ENCODE measurements at regions of chr2 and their contacts with region 1.

Region 1: GRCh38 chr2:36322108-36322507 is 33.5 kb upstream of the CRIM1 start:
- DNase-seq: no peak
- ATAC-seq: peak; percentile 81; the same call in 1 of the 2 replicates
- H3K4me3 ChIP-seq: no peak overlapping the region
- H3K27ac ChIP-seq: no peak overlapping the region
- H3K4me1 ChIP-seq: no peaks in the 10 kb centered on the region
- H3K27me3 ChIP-seq: no peaks in the 10 kb centered on the region
- CTCF ChIP-seq: peak; percentile 64

Region 2: GRCh38 chr2:35973132-35973736 is 348.9 kb before region 1 on chr2:
- CTCF ChIA-PET with region 1: no interaction called
- POLR2A ChIA-PET with region 1: no interaction called
- in situ Hi-C with region 1: no loop called
- intact Hi-C with region 1: loop called (anchors 10 kb)
- DNase-seq: no peak
- ATAC-seq: peak; percentile 88
- H3K4me3 ChIP-seq: no peak overlapping the region
- H3K27ac ChIP-seq: no peak overlapping the region
- H3K4me1 ChIP-seq: no peaks in the 10 kb centered on the region
- H3K27me3 ChIP-seq: no peaks in the 10 kb centered on the region
- CTCF ChIP-seq: peak; percentile 75; the same call in 1 of the 2 replicates

Measured in Panc1 (cell line).